PC-9 (cell line): ENCODE measurements at regions of chr3 and their contacts with region 1.

Region 1: GRCh38 chr3:129052675-129053074 is 7.9 kb upstream of the GP9 start:
- DNase-seq: no peak
- H3K4me3 ChIP-seq: no peak overlapping the region
- H3K27ac ChIP-seq: no peak overlapping the region
- H3K4me1 ChIP-seq: no peaks in the 10 kb centered on the region; the same call in 1 of the 2 replicates
- H3K27me3 ChIP-seq: peaks cover 9% of the 10 kb centered on the region
- CTCF ChIP-seq: no peak

Region 2: DNA sequence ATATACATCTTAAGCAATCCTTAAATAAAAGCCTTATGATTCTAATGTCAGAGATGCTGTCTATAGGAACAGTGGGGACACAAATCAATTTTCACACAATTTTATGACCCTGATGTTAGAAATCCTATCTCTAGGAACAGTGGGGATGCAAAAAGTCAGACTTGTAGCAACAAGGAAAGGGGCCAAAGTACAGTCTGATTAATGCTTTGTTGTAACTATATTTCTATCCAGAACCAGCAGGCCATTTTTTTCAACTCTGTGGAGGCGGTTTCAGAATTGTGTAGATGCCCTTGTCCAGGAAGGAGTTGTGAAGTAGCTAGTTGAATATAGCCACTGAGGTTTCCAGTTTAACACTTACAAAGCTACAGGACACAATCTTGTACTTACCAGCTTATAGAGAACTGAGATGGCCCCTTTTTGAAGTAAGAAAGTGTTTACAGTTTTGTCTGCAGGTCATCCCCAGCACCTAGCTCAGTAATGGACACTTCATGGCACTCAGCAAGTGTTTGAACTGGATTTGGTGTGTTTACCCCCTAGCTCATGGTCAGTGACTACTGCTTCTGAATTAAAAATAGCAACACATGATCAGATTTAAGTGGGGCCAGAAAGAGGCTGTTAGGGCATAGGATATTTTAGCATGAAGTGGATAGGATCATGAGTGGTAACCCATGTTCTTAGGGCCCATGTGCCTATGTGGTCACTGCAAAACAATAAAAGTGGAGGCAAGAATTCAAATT is 272.4 kb before region 1 on chr3:
- CTCF ChIA-PET with region 1: no interaction called
- POLR2A ChIA-PET with region 1: no interaction called
- intact Hi-C with region 1: no loop called
- DNase-seq: no peak
- H3K4me3 ChIP-seq: no peak overlapping the region
- H3K27ac ChIP-seq: no peak overlapping the region
- H3K4me1 ChIP-seq: peaks cover 23% of the 10 kb centered on the region
- H3K27me3 ChIP-seq: no peaks in the 10 kb centered on the region
- CTCF ChIP-seq: no peak

Region 3: GRCh38 chr3:129003578-129004160 is 49.0 kb before region 1 on chr3:
- CTCF ChIA-PET with region 1: interaction called, 9 read pairs
- POLR2A ChIA-PET with region 1: interaction called, 3 read pairs
- intact Hi-C with region 1: loop called (anchors 2 kb)
- DNase-seq: peak in 1 of 2 experiments; percentile 79
- H3K4me3 ChIP-seq: no peak overlapping the region
- H3K27ac ChIP-seq: no peak overlapping the region
- H3K4me1 ChIP-seq: no peaks in the 10 kb centered on the region
- H3K27me3 ChIP-seq: peaks cover 5% of the 10 kb centered on the region; the same call in 1 of the 2 replicates
- CTCF ChIP-seq: no peak